Naive thymus-derived CD4-positive, alpha-beta T cell (primary cell): ENCODE measurements at regions of chr1 and their contacts with region 1.

Region 1: GRCh38 chr1:175319418-175320230 is 127.0 kb upstream of the KIAA0040 start:
- DNase-seq: peak; percentile 45 to 71 (median 62)
- ATAC-seq: peak; percentile 91
- H3K4me3 ChIP-seq: no peak overlapping the region
- H3K4me3 Mint-ChIP-seq: peak overlapping the region in 5 of 10 donors; percentile 8 to 44 (median 42)
- H3K27ac ChIP-seq: no peak overlapping the region
- H3K27ac Mint-ChIP-seq: no peak overlapping the region
- H3K4me1 ChIP-seq: peaks cover 4 to 5% of the 10 kb centered on the region in 2 donors
- H3K4me1 Mint-ChIP-seq: peaks cover 4 to 29% (median 18%) of the 10 kb centered on the region in 7 donors
- H3K27me3 ChIP-seq: no peaks in the 10 kb centered on the region
- H3K27me3 Mint-ChIP-seq: peaks cover 0 to 29% (median 5%) of the 10 kb centered on the region in 5 donors

Region 2: GRCh38 chr1:175146529-175147213 is 173.0 kb before region 1 on chr1:
- CTCF ChIA-PET with region 1: interaction called, 182 read pairs
- POLR2A ChIA-PET with region 1: interaction called, 4 read pairs
- intact Hi-C with region 1: no loop called
- DNase-seq: peak; percentile 30 to 69 (median 54)
- ATAC-seq: peak; percentile 86
- H3K4me3 ChIP-seq: no peak overlapping the region
- H3K4me3 Mint-ChIP-seq: no peak overlapping the region
- H3K27ac ChIP-seq: no peak overlapping the region
- H3K27ac Mint-ChIP-seq: peak overlapping the region in 1 of 9 donors; percentile 2
- H3K4me1 ChIP-seq: no peaks in the 10 kb centered on the region
- H3K4me1 Mint-ChIP-seq: peaks cover 0 to 8% (median 2%) of the 10 kb centered on the region in 7 donors
- H3K27me3 ChIP-seq: no peaks in the 10 kb centered on the region
- H3K27me3 Mint-ChIP-seq: peaks cover 12 to 40% (median 18%) of the 10 kb centered on the region in 5 donors

Region 3: GRCh38 chr1:175297291-175297690 is 22.3 kb before region 1 on chr1:
- CTCF ChIA-PET with region 1: interaction called, 3 read pairs
- POLR2A ChIA-PET with region 1: no interaction called
- intact Hi-C with region 1: loop called in 1 of 2 experiments (anchors 1 kb)
- DNase-seq: peak in 7 of 9 donors; percentile 39 to 76 (median 68)
- ATAC-seq: peak; percentile 91
- H3K4me3 ChIP-seq: no peak overlapping the region
- H3K4me3 Mint-ChIP-seq: peak overlapping the region in 7 of 10 donors; percentile 32 to 67 (median 46)
- H3K27ac ChIP-seq: no peak overlapping the region
- H3K27ac Mint-ChIP-seq: no peak overlapping the region
- H3K4me1 ChIP-seq: peaks cover 5 to 29% of the 10 kb centered on the region in 2 donors
- H3K4me1 Mint-ChIP-seq: peaks cover 11 to 53% (median 42%) of the 10 kb centered on the region in 7 donors
- H3K27me3 ChIP-seq: no peaks in the 10 kb centered on the region
- H3K27me3 Mint-ChIP-seq: peaks cover 10 to 32% (median 14%) of the 10 kb centered on the region in 5 donors